CD8-positive, alpha-beta T cell (primary cell): ENCODE measurements at regions of chr2 and their contacts with region 1.

Region 1: DNA sequence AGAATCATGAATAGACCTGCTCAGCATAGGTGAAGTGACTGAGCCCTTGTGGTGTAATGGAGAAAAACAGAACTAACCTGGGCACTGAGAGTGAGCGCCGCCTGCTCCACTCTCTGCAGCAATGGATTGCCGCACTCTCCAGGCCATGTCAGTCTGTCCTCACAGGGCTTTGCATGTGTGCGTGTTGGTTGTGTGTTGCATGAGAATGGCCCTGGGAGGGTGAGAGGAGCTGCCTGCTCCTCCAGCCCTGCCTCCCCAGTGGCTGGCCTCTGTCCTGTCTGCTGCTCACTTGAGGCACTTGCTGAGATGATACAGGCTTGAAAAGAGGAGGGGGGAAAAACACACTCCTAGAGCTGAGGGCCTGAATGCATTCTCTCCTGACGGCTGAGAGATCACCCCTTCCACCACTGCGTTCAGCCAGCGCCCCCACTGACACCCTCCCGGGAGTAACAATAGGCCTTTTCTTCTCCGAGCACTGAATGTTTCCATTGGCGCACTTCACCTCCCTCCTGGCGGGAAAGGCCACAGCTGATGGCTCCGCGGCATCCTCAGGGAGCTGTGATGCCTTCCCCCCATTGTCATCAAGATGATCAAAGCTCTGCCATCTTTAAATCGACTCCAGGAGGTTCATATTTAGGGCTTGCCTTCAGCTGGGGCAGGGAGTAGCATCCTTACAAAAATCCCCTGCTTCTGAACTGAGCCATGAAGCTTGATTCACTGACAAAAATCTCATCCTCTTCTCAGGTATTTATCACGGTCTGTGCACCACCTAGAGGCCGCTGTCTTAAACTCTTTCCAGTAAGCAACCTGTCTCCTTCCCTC is 49.9 kb upstream of the DAPL1 start:
- DNase-seq: peak in 6 of 9 experiments; percentile 18 to 54 (median 39)
- ATAC-seq: peak; percentile 46
- H3K4me3 ChIP-seq: no peak overlapping the region
- H3K4me3 Mint-ChIP-seq: no peak overlapping the region
- H3K27ac ChIP-seq: no peak overlapping the region
- H3K27ac Mint-ChIP-seq: no peak overlapping the region
- H3K4me1 ChIP-seq: no peaks in the 10 kb centered on the region
- H3K4me1 Mint-ChIP-seq: no peaks in the 10 kb centered on the region
- H3K27me3 ChIP-seq: no peaks in the 10 kb centered on the region
- H3K27me3 Mint-ChIP-seq: peaks cover 29% of the 10 kb centered on the region
- CTCF ChIP-seq: no peak

Region 2: GRCh38 chr2:157777427-157777826 is 967.8 kb before region 1 on chr2:
- CTCF ChIA-PET with region 1: no interaction called
- POLR2A ChIA-PET with region 1: no interaction called
- intact Hi-C with region 1: loop called (anchors 2 to 5 kb)
- DNase-seq: peak in 8 of 9 experiments; percentile 4 to 55 (median 40)
- ATAC-seq: no peak
- H3K4me3 ChIP-seq: no peak overlapping the region
- H3K4me3 Mint-ChIP-seq: no peak overlapping the region
- H3K27ac ChIP-seq: no peak overlapping the region
- H3K27ac Mint-ChIP-seq: no peak overlapping the region
- H3K4me1 ChIP-seq: no peaks in the 10 kb centered on the region
- H3K4me1 Mint-ChIP-seq: peaks cover 11% of the 10 kb centered on the region
- H3K27me3 ChIP-seq: no peaks in the 10 kb centered on the region
- H3K27me3 Mint-ChIP-seq: no peaks in the 10 kb centered on the region
- CTCF ChIP-seq: peak; percentile 68

Region 3: DNA sequence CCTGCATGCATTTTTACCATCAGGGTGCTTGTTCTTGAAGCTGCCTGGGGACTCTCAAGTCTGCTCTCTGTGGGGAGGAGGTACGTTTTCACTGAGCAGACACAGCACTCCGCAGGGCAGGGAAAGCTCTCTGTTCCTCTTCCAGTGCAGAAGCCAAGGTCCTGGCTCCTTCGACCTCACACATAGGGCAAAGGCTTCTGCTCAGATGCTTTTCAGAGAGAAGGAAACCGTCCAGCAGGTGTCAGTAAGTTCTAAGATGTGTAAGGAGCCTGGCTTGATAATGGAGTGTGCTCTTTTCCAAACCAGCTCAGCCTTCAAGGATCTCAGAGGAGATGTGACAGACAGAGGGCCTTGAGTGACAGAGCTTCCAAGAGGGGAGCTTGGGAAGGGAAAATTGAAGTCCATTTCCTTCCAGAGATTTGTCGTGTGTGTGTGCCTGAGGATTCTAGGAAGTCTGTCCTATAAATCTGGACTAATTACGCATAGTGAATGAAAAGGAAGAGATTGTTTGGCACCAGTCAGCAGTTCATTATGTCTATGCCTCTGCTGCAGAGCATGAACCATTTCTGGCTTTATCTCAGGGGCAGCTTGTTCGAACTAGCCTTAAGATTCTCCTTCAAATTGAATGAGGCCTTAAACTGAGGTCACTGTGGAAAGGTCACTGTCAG is 710.9 kb before region 1 on chr2:
- CTCF ChIA-PET with region 1: interaction called, 17 read pairs
- POLR2A ChIA-PET with region 1: no interaction called
- intact Hi-C with region 1: no loop called
- DNase-seq: peak in 2 of 9 experiments; percentile 12 to 35
- ATAC-seq: no peak
- H3K4me3 ChIP-seq: no peak overlapping the region
- H3K4me3 Mint-ChIP-seq: no peak overlapping the region
- H3K27ac ChIP-seq: no peak overlapping the region
- H3K27ac Mint-ChIP-seq: no peak overlapping the region
- H3K4me1 ChIP-seq: no peaks in the 10 kb centered on the region
- H3K4me1 Mint-ChIP-seq: no peaks in the 10 kb centered on the region
- H3K27me3 ChIP-seq: no peaks in the 10 kb centered on the region
- H3K27me3 Mint-ChIP-seq: peaks cover 11% of the 10 kb centered on the region
- CTCF ChIP-seq: no peak

Region 4: DNA sequence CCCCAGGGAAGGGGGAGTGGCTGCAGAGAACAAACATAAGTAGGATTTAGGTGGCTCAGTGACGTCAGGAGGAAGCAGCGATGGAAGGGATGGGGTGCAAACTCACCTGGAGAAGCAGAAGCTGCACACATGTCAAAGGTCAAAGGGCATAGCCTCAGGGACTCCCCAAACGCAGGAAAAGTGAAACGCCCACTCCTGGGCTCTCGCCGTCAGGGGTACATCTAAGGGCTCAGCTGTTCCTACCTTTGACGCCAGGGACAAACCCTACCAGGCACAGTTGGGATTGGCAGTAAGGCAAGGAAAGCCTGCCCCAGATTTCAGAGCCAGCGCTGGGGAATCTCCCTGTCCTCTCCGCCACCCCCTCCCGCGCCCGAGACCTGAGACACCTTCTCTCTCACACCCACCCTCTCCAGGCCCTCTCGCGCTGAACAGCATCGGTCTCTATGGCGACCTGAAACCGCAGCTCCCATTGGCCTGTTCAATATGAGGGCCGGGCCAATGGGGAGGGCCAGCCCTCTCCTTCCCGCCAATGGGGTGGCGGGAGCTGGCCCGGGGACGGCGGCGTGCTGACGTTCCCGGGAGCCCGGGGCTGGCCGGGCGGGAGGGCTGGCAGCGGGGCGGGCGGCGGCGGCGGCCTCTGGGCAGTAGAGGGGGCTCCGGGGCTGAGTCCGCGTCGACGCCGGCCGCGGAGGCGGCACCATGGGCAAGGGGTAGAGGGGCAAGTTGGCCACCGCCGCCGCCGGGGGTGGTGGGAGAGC is 288.8 kb before region 1 on chr2 and contains the starts of genes CCDC148 and PKP4:
- CTCF ChIA-PET with region 1: no interaction called
- POLR2A ChIA-PET with region 1: no interaction called
- intact Hi-C with region 1: loop called in 1 of 2 experiments (anchors 5 kb)
- DNase-seq: peak; percentile 74 to 97 (median 86)
- ATAC-seq: peak; percentile 91
- H3K4me3 ChIP-seq: peak within 1 kb of the TSS; percentile 69 to 81
- H3K4me3 Mint-ChIP-seq: peak within 1 kb of the TSS; percentile 96
- H3K27ac ChIP-seq: peak within 1 kb of the TSS; percentile 23 to 49
- H3K27ac Mint-ChIP-seq: peak within 1 kb of the TSS; percentile 76
- H3K4me1 ChIP-seq: peaks cover 12% of the 10 kb centered on the region
- H3K4me1 Mint-ChIP-seq: peaks cover 16% of the 10 kb centered on the region
- H3K27me3 ChIP-seq: no peaks in the 10 kb centered on the region
- H3K27me3 Mint-ChIP-seq: peaks cover 13% of the 10 kb centered on the region
- CTCF ChIP-seq: no peak
- total RNA-seq, gene CCDC148: not detected
- total RNA-seq, gene PKP4: 5.7 to 8.1 TPM